Sciatic nerve (tissue), 2 donors: ENCODE measurements at regions of chr18 and their contacts with region 1.

Region 1: DNA sequence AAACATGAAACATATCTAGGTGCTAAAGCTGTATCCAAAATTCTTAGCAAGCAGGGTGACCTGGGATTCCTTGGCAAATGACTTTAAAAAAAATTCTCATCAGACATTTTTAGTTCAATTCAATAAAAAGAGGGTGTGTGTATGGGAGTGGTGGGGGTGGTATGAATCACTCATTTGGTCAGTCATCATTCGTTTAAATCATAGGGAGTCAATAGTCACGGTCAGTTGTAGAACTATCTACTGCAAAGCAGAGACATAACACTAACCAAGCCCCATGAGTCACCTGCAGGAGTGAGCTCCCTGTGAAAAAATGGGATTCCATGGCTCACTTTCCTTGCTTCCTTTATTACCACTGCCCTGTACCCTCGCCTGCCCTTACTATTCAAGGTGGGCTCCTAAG is 380.6 kb upstream of the TCF4 start:
- DNase-seq: no peak
- ATAC-seq: no peak

Region 2: DNA sequence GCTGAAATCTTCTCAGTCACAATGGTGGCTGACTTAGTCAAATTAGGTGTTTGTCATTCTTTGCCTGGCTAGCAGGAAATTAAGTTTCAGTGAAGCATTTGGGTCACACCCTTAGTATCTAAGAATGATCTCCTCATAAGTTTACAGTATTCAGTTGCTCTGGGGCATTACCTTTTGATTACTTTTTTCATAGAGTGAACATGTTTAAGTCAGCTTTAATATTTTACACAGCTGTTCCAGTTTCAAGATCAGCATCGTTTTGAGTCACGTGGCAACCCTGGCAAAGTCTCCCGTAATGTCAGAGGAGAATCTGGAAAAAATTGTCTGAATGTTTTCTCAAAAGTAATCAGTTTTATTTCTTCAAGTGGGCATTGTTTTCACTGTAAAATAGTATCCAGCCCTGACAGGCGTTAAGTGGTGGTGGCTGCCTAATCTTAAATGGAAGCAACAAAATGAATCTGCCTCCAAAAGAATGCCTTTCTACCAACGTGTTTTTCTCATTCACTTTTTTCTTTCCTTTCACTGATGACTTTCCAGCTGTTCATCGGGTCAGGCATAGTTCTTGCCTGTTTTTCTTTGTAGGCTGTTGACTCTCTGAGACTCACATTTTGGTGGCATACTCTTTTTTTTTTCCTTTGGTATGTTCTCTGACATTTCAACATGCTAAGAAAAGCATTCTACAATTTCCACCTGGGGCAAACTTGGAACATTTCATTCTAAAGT is 60.9 kb before region 1 on chr18:
- intact Hi-C with region 1: loop called (anchors 10 kb)
- DNase-seq: peak; percentile 60
- ATAC-seq: peak; percentile 52